GM18951 (cell line): ENCODE measurements at regions of chr7 and their contacts with region 1.

Region 1: DNA sequence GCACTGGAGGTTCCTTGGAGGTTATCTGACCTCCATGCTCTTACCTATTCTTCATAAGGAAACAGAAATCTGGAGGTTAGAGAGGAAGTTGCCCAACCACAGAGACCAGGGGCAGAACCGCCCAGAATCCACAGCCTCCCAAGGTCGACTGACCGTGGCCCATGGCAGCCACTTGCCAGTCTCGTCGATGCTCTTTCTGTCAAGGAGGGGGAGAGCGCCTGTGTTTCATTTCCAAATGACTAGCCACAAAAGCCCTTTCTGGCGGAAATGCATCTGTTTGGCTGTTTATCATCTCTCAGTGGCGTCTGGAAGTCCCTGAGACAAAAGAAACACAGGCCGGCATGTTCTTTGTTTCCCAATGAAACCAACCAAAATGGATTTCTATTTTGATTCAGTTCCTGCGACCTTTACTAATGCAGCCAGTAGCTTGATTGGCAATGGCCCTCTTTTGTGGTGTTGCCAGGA is 2.9 kb downstream of the RAMP3 start:
- POLR2A ChIP-seq: no peak

Region 2: GRCh38 chr7:45259966-45260646 is 99.7 kb after region 1 on chr7:
- in situ Hi-C with region 1: loop called (anchors 10 kb)
- POLR2A ChIP-seq: no peak

Region 3: DNA sequence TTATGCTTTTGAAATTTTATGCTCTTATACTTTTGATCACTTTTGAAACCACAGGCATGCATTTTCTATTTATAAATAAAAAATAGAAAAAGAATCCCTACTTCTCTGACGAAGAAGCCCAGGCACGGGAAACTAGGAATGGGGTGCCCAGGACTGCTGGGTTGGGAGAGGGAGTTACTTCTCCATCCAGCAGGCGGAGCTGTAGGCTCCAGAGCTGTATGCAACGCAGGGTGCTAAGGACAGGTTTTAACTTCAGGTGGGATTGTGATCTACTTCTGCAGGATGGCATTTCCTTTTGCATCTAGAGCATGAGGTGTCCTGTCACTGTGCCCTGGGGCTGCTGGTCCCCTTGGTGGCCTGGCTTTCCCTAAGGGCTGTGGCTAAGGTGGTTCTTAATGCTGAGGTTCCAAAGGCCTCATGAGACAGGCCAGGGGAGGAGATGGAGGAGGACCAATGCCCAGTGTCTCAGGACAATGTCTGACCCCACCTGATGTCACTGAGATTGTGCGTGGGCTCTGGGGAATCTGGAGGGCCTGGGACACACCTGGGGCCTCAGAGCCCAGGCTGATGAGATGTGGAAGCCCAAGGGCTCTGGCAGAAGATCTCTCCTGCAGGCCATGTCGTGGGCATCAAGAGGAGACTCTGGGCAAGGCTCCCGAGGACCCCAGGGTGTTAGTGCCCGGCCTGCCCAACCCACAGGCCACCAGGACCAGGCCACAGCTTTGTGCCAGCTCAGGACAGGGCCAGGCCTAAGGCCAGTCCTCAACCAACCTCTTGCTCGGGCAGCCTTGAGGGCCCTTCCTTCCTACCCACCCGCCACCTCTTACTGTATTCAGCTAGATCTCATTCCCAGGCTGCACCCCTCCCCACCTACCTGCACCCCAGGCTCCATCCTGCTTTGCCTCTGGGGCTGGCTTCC is 711.9 kb after region 1 on chr7:
- in situ Hi-C with region 1: loop called (anchors 25 kb)
- POLR2A ChIP-seq: no peak